ENCODE measurements at regions of chr22 and their contacts with region 1.

Region 1: DNA sequence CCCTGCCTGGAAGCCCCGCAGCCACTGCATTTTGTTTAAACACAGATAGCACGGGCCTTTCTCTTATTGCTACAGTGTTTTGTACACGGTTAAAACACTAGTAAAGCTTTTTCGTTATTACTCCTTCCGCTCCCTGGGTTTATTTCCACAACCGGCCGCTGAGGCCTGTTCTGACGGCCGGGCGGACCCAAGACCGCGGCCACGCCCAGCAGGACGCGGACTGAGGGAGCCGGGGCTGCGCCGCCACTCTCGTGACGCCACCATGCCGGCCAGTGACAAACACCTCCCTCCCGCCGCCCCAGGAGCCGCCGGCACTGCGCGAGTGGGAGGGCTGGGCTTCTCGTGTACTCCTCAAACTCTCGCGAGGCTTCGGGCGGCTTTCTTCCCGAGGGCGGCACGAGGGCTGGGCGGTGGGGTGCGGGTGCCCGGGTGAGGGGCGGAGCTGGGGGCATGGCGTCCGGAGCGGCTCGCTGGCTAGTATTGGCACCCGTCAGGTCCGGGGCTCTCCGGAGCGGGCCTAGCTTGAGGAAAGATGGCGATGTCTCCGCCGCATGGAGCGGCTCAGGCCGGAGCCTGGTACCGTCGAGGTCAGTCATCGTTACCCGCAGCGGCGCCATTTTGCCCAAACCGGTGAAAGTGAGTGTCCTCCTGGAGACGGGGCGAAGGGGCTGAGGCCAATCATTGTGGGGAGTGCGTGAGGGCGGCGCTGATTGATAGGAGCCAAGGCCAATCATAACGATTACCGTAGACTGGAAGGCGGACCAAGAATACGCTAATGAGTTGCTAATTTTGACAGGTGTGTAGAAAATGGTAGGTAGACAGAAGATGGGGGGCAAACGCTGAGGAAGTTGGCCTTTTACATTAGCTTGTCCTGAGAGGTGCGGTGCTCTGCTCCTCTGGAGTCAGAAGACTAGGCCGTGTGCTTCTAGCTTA is at the start of gene SMDT1:
- DNase-seq: peak; percentile 99
- H3K4me3 Mint-ChIP-seq: peak within 1 kb of the TSS; percentile 92
- H3K27ac Mint-ChIP-seq: peak within 1 kb of the TSS; percentile 93
- H3K4me1 Mint-ChIP-seq: peaks cover 28% of the 10 kb centered on the region
- H3K27me3 Mint-ChIP-seq: no peaks in the 10 kb centered on the region
- total RNA-seq, gene SMDT1: 54.4 and 58.7 TPM in 2 replicates

Region 2: GRCh38 chr22:41998361-41999275 is 81.0 kb before region 1 on chr22 and contains the start of gene WBP2NL:
- intact Hi-C with region 1: loop called (anchors 2 kb)
- DNase-seq: peak; percentile 97
- H3K4me3 Mint-ChIP-seq: peak within 1 kb of the TSS; percentile 95
- H3K27ac Mint-ChIP-seq: peak within 1 kb of the TSS; percentile 99
- H3K4me1 Mint-ChIP-seq: peaks cover 23% of the 10 kb centered on the region
- H3K27me3 Mint-ChIP-seq: no peaks in the 10 kb centered on the region
- total RNA-seq, gene WBP2NL: 1.3 and 1.4 TPM in 2 replicates

Region 3: DNA sequence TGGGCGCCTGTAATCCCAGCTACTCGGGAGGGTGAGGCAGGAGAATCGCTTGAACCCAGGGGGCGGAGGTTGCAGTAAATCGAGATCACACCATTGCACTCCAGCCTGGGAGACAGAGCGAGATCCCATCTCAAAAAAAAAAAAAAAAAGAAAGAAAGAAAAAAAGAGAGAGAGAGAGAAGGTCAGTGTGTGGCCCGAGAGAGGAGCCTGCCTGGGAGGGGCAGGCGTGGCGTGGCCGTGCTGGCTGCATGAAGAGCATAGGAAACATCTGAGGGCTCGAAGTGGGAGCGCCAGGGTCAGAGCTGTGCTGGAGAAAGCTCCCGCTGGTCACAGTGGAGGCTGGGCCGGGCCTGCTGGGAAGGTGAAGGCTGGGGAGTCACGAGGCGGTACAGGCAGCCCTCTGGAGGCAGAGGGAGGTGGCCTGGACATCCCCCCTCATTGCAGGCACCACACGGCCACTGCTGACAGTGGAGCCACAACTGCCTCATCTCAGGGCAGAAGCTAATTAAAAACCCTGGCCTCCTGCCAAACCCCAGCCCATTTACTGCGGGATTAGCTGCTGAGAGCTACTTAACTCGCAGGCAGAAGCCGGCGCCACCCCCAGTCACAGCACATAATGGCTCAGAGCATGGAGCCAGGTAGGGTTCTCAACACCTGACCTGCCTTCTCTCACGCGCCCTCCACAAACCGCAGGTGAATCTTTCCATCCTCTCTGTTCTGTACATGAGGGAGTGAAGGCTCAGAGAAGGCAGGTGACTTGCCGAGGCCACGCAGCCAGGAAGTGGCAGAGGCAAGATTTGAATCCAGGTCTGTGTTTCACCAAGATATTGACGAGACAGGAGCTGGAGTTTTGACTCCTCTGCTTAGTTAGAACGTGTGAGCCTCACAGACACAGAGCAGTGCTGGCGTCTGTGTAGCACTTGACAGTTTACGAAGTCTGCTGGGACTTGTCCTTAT is 320.0 kb after region 1 on chr22:
- intact Hi-C with region 1: no loop called
- DNase-seq: no peak
- H3K4me3 Mint-ChIP-seq: no peak overlapping the region
- H3K27ac Mint-ChIP-seq: no peak overlapping the region
- H3K4me1 Mint-ChIP-seq: peaks cover 4% of the 10 kb centered on the region
- H3K27me3 Mint-ChIP-seq: no peaks in the 10 kb centered on the region